RWPE1 (cell line): ENCODE measurements at regions of chr4 and their contacts with region 1.

Region 1: DNA sequence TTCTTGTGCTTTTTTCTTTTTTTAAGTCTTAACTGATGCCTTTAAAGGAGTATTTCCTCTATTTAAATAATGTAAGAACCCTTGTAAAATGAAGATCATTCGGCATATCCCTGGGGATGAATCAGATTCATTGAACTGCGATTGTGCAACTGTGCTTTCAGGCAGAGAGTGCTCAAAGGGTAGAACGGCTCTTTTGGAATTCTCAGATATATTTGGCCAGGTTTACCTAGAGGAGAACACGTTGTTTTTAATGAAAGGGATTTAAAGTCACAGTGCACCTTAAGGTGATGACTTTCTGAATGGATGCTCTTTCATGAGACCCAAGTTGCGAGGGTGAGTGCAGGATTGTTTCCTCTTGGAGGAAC is 51.6 kb upstream of the ELOVL6 start:
- DNase-seq: no peak
- H3K27ac ChIP-seq: no peak overlapping the region
- CTCF ChIP-seq: no peak

Region 2: GRCh38 chr4:110550260-110550659 is 300.3 kb after region 1 on chr4:
- CTCF ChIA-PET with region 1: no interaction called
- POLR2A ChIA-PET with region 1: no interaction called
- DNase-seq: no peak
- H3K27ac ChIP-seq: no peak overlapping the region
- CTCF ChIP-seq: no peak

Region 3: DNA sequence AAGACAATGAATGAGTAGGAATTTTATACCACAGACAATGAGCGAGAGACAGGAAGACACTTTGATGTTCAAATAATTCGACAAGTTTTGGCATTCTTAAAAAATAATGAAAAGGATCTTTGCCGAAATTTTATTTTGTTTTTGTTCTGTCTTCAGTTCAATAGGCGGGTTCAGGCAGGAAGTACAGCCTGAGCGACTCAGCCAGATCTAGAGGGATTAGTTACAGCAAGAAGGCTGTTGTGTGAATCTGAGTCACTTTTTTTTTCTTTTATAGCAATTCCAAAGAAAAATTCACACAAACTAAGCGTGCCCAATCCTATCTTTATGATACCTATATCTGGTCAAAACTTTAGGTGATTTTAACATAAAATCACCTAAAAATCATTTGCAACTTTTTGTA is 1389.9 kb after region 1 on chr4:
- CTCF ChIA-PET with region 1: interaction called, 10 read pairs
- POLR2A ChIA-PET with region 1: no interaction called
- DNase-seq: peak; percentile 19
- H3K27ac ChIP-seq: no peak overlapping the region
- CTCF ChIP-seq: no peak